ENCODE measurements at regions of chr11 and their contacts with region 1.

Region 1: GRCh38 chr11:87037450-87038234 is at the start of gene TMEM135:
- DNase-seq: peak; percentile 92
- ATAC-seq: peak; percentile 97
- H3K4me3 ChIP-seq: peak within 1 kb of the TSS; percentile 96
- H3K27ac ChIP-seq: peak within 1 kb of the TSS; percentile 50; the same call in 1 of the 2 replicates
- H3K4me1 ChIP-seq: no peaks in the 10 kb centered on the region; the same call in 1 of the 2 replicates
- H3K27me3 ChIP-seq: no peaks in the 10 kb centered on the region; a peak in 1 of 4 replicates
- CTCF ChIP-seq: no peak
- EP300 ChIP-seq: no peak
- POLR2A ChIP-seq: peak; percentile 91
- RAD21 ChIP-seq: no peak
- polyA plus RNA-seq, gene TMEM135: 7.2 to 9.1 TPM

Region 2: DNA sequence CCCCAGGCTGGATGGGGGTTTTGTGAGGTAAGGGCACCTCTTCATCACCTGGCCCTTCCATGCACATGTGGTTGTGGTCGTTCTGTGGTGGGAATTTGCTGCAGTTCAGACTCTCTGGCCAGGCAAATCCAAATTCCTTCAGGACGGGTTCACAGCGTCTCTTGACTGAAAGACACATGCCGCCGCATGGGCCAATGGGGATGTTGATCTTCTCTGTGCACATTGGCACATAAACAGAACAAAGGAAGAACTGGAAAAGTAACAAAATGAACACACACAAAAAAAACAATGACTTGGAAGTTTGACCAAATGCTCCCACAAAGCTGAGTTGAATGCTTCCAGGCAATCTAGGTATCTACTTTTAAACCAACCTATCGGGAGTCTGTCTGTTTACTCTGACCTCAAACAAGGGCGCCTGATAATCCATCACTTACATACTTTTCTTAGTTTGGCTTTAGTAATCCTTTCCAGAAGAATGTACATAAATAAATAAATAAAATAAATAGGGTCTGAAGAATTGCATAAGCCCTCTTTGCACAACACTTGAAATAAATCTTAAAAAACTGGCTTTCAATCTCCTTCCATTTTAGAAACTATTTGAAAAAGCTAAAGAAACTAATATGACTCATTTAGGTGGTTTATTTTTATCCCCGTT is 85.3 kb before region 1 on chr11:
- CTCF ChIA-PET with region 1: no interaction called
- POLR2A ChIA-PET with region 1: no interaction called
- RAD21 ChIA-PET with region 1: no interaction called
- SMC1A ChIA-PET with region 1: no interaction called
- in situ Hi-C with region 1: no loop called
- intact Hi-C with region 1: no loop called
- DNase-seq: no peak
- ATAC-seq: no peak
- H3K4me3 ChIP-seq: no peak overlapping the region
- H3K27ac ChIP-seq: no peak overlapping the region
- H3K4me1 ChIP-seq: no peaks in the 10 kb centered on the region; the same call in 1 of the 2 replicates
- H3K27me3 ChIP-seq: peaks cover 3 to 9% of the 10 kb centered on the region in 2 experiments; a peak in 2 of 4 replicates
- CTCF ChIP-seq: no peak
- EP300 ChIP-seq: no peak
- POLR2A ChIP-seq: no peak
- RAD21 ChIP-seq: no peak

Region 3: GRCh38 chr11:87057749-87058148 is 20.1 kb after region 1 on chr11:
- CTCF ChIA-PET with region 1: no interaction called
- POLR2A ChIA-PET with region 1: no interaction called
- RAD21 ChIA-PET with region 1: no interaction called
- SMC1A ChIA-PET with region 1: interaction called, 3 read pairs
- in situ Hi-C with region 1: no loop called
- intact Hi-C with region 1: loop called (anchors 2 kb)
- DNase-seq: no peak
- ATAC-seq: no peak
- H3K4me3 ChIP-seq: no peak overlapping the region
- H3K27ac ChIP-seq: no peak overlapping the region
- H3K4me1 ChIP-seq: no peaks in the 10 kb centered on the region
- H3K27me3 ChIP-seq: no peaks in the 10 kb centered on the region
- CTCF ChIP-seq: no peak
- EP300 ChIP-seq: no peak
- POLR2A ChIP-seq: no peak
- RAD21 ChIP-seq: no peak

Region 4: DNA sequence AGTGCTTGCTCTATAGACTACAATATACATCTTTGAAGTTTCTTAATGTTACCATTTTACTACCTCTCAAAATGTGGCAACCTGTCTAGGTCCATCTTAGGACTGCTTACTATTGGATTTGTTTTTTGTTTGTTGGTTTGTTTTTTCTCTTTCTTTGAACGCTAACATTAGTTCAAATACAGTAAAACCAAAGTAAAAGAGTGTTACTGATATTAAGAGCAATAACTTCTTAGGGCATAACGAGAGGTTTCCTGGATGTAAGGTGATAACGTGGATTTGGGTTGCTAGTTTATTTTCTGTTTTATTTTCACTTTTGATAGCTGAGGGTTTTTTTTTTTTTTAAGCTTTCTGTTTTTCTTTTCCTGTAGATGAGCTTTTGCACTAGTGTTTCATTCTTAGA is 43.7 kb after region 1 on chr11:
- CTCF ChIA-PET with region 1: interaction called, 6 read pairs
- POLR2A ChIA-PET with region 1: interaction called, 11 read pairs
- RAD21 ChIA-PET with region 1: interaction called, 8 read pairs
- SMC1A ChIA-PET with region 1: interaction called, 11 read pairs
- in situ Hi-C with region 1: no loop called
- intact Hi-C with region 1: loop called (anchors 10 kb)
- DNase-seq: peak; percentile 34
- ATAC-seq: peak; percentile 76
- H3K4me3 ChIP-seq: peak overlapping the region; percentile 58; the same call in 1 of the 2 replicates
- H3K27ac ChIP-seq: peak overlapping the region; percentile 72
- H3K4me1 ChIP-seq: peaks cover 4% of the 10 kb centered on the region; the same call in 1 of the 2 replicates
- H3K27me3 ChIP-seq: no peaks in the 10 kb centered on the region
- CTCF ChIP-seq: no peak
- EP300 ChIP-seq: no peak
- POLR2A ChIP-seq: no peak
- RAD21 ChIP-seq: no peak